CD4-positive, alpha-beta T cell (primary cell): ENCODE measurements at regions of chr14 and their contacts with region 1.

Region 1: DNA sequence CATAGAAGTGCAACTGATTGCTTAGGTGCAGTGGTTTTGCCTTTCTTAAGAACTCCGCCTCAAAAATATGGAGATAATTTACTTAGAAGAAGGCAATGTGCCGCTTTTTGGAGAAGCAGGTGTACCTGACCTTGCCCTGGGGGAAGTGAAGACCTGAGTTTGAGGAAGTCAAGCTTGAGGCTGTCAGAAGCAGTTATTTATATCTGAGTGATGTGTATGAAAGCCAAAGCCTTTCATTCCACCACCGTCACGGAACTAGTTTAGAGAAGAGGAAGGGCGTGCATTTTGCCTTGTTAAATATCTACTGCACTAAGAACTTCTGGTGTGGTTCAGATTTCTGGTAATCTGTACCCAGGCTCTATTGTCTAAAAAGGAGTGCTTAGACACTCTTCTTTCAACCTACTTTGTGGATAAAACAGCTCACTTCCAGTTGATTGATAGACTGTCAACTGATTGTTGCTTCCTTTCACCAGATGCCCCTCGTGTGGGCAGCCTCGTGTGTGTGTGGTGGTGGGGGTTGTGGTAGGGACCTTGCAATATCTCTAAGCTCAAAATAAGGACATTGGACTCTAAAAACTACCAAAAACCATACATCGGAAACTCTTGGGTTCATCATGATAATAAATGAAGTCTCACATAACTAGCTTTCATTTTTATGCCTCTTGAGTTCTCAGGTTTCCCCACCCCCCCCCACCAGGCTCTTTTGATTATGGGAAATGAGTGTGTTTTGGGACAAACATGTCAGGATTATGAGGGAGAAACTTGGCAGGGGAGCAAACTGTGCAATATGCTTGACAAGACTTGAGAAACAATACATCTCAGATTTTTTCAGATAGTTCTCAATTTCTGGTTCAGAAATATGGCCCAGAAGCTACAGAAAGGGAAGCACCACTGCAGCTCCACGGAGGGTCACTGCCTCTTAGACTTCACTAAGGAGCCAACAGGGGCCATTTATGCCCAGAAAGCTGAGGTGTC is 78.6 kb downstream of the ARF6 start:
- DNase-seq: peak in 13 of 14 experiments; percentile 16 to 87 (median 55)
- ATAC-seq: peak; percentile 84
- H3K4me3 ChIP-seq: peak overlapping the region; percentile 30
- H3K4me3 Mint-ChIP-seq: peak overlapping the region; percentile 50
- H3K27ac ChIP-seq: peak overlapping the region; percentile 80 to 85
- H3K27ac Mint-ChIP-seq: peak overlapping the region; percentile 90
- H3K4me1 ChIP-seq: peaks cover 66% of the 10 kb centered on the region
- H3K4me1 Mint-ChIP-seq: peaks cover 59% of the 10 kb centered on the region
- H3K27me3 ChIP-seq: no peaks in the 10 kb centered on the region
- H3K27me3 Mint-ChIP-seq: no peaks in the 10 kb centered on the region
- CTCF ChIP-seq: no peak

Region 2: DNA sequence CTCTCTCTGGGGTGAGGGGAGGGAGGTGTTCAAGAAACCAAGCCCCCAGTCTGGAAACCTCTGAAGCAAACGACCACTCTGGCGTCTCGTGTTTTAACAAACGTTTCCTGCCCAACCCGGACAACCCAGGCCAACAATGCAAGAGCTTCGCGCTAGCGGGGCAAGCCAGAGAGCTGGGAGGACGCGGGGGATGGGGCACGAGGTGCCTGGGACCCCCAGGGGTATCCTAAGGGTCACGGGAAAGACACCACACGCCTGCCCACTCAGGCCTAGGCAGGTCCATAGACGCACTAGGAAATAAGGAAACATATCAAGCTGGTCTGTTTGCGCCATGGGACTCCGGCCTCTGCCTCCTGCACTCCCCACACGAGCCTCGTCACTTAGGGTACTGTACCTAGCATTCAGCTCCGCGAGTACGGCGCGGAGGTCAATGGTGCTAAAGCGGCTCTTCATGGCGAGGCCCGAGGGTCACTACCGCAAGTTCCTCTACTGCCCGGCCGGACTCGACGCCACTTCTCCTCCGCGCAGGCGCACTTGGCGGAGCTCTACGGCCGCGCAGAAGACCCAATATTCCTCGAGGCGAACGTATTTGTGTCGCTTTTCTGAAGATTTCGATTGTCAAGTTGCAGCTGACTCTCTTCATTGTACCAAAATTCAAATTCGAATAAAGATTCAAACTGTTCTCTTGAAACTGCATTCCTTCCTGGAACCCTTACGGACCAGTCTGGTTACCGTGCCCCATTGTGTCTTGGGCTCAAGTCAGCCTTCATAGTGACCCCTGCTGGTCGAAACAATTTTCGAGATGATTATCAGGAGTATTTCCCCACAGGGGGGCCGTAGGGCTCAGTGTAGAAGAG is 118.9 kb before region 1 on chr14 and contains the start of gene NEMF:
- CTCF ChIA-PET with region 1: no interaction called
- POLR2A ChIA-PET with region 1: interaction called, 12 read pairs
- intact Hi-C with region 1: no loop called
- DNase-seq: peak; percentile 67 to 91 (median 72)
- ATAC-seq: peak; percentile 75
- H3K4me3 ChIP-seq: peak within 1 kb of the TSS; percentile 97
- H3K4me3 Mint-ChIP-seq: peak within 1 kb of the TSS; percentile 99
- H3K27ac ChIP-seq: peak within 1 kb of the TSS; percentile 64 to 80
- H3K27ac Mint-ChIP-seq: peak within 1 kb of the TSS; percentile 91
- H3K4me1 ChIP-seq: peaks cover 17% of the 10 kb centered on the region
- H3K4me1 Mint-ChIP-seq: peaks cover 46% of the 10 kb centered on the region
- H3K27me3 ChIP-seq: no peaks in the 10 kb centered on the region
- H3K27me3 Mint-ChIP-seq: no peaks in the 10 kb centered on the region
- CTCF ChIP-seq: peak; percentile 89
- total RNA-seq, gene NEMF: 96.0 to 97.7 TPM

Region 3: GRCh38 chr14:49940808-49941421 is 30.5 kb before region 1 on chr14:
- CTCF ChIA-PET with region 1: interaction called, 5 read pairs
- POLR2A ChIA-PET with region 1: interaction called, 62 read pairs
- intact Hi-C with region 1: loop called in 1 of 2 experiments (anchors 5 kb)
- DNase-seq: peak in 6 of 14 experiments; percentile 10 to 75 (median 34)
- ATAC-seq: peak; percentile 68
- H3K4me3 ChIP-seq: peak overlapping the region; percentile 19
- H3K4me3 Mint-ChIP-seq: peak overlapping the region; percentile 69
- H3K27ac ChIP-seq: peak overlapping the region in 1 of 2 donors; percentile 38
- H3K27ac Mint-ChIP-seq: peak overlapping the region; percentile 57
- H3K4me1 ChIP-seq: peaks cover 47% of the 10 kb centered on the region
- H3K4me1 Mint-ChIP-seq: peaks cover 68% of the 10 kb centered on the region
- H3K27me3 ChIP-seq: no peaks in the 10 kb centered on the region
- H3K27me3 Mint-ChIP-seq: no peaks in the 10 kb centered on the region
- CTCF ChIP-seq: no peak

Region 4: DNA sequence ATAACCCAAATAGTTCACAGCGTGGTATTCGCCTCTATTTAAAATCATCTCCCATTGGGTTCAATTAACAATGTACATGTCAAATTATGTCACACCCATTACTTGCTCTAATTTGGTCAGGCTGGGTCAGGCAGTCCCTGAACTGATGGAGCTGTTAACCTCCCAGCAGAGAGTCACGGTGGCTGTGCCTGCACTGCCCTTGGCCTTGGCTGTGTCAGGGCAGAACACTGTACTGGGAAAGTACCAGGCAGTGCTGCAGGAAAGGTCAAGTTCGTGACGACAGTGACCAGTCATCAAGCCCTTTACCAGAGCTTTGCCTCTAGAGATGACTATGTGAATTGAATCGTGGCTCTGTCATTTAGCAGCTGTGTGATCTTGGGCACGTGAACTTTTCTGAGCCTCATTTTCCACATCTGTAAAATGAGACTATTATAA is 21.5 kb after region 1 on chr14:
- CTCF ChIA-PET with region 1: interaction called, 4 read pairs
- POLR2A ChIA-PET with region 1: interaction called, 17 read pairs
- intact Hi-C with region 1: no loop called
- DNase-seq: no peak
- ATAC-seq: no peak
- H3K4me3 ChIP-seq: no peak overlapping the region
- H3K4me3 Mint-ChIP-seq: no peak overlapping the region
- H3K27ac ChIP-seq: no peak overlapping the region
- H3K27ac Mint-ChIP-seq: no peak overlapping the region
- H3K4me1 ChIP-seq: peaks cover 17% of the 10 kb centered on the region
- H3K4me1 Mint-ChIP-seq: peaks cover 13% of the 10 kb centered on the region
- H3K27me3 ChIP-seq: no peaks in the 10 kb centered on the region
- H3K27me3 Mint-ChIP-seq: no peaks in the 10 kb centered on the region
- CTCF ChIP-seq: no peak

Region 5: GRCh38 chr14:50020184-50020583 is 48.7 kb after region 1 on chr14:
- CTCF ChIA-PET with region 1: no interaction called
- POLR2A ChIA-PET with region 1: no interaction called
- intact Hi-C with region 1: no loop called
- DNase-seq: no peak
- ATAC-seq: no peak
- H3K4me3 ChIP-seq: no peak overlapping the region
- H3K4me3 Mint-ChIP-seq: no peak overlapping the region
- H3K27ac ChIP-seq: no peak overlapping the region
- H3K27ac Mint-ChIP-seq: no peak overlapping the region
- H3K4me1 ChIP-seq: peaks cover 15% of the 10 kb centered on the region
- H3K4me1 Mint-ChIP-seq: peaks cover 28% of the 10 kb centered on the region
- H3K27me3 ChIP-seq: no peaks in the 10 kb centered on the region
- H3K27me3 Mint-ChIP-seq: no peaks in the 10 kb centered on the region
- CTCF ChIP-seq: no peak

Region 6: DNA sequence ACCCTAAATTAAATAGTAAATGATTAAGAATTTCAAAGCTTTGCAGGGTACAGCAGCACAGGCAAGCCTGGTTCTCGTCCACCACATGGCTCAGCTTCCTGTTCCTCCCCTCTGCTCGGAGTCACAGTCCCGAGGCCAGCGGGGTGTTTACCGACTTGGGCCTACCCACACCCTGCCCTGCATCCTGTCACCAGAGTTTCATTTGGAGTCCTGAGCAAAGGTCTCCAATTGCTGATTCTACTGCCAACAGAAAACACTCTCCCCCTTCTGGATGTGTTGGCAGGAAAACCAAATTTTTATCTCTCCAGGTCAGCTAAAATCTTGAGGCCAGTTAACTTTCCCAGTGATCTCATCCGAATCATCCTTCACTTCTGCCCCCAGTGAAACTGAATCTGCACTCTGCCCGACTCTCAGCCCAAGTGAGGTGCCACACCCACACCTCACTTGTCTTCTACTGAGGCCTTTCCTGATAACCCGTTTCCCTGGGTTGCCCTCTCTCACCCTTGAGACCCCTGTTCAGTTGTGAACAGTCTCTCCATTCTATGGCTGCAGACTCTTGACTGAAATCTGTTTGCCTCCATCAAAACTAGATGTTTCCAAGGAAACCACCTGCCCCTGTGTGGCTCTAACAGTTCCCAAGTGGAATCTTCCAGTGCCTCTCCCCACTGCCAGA is 73.7 kb after region 1 on chr14:
- CTCF ChIA-PET with region 1: no interaction called
- POLR2A ChIA-PET with region 1: interaction called, 10 read pairs
- intact Hi-C with region 1: loop called in 1 of 2 experiments (anchors 2 kb)
- DNase-seq: peak; percentile 35 to 93 (median 72)
- ATAC-seq: peak; percentile 67
- H3K4me3 ChIP-seq: no peak overlapping the region
- H3K4me3 Mint-ChIP-seq: peak overlapping the region; percentile 43
- H3K27ac ChIP-seq: peak overlapping the region; percentile 48 to 78
- H3K27ac Mint-ChIP-seq: peak overlapping the region; percentile 89
- H3K4me1 ChIP-seq: peaks cover 72% of the 10 kb centered on the region
- H3K4me1 Mint-ChIP-seq: peaks cover 65% of the 10 kb centered on the region
- H3K27me3 ChIP-seq: no peaks in the 10 kb centered on the region
- H3K27me3 Mint-ChIP-seq: no peaks in the 10 kb centered on the region
- CTCF ChIP-seq: no peak

Region 7: GRCh38 chr14:50109342-50109741 is 137.9 kb after region 1 on chr14:
- CTCF ChIA-PET with region 1: interaction called, 4 read pairs
- POLR2A ChIA-PET with region 1: interaction called, 5 read pairs
- intact Hi-C with region 1: loop called in 1 of 2 experiments (anchors 2 kb)
- DNase-seq: no peak
- ATAC-seq: no peak
- H3K4me3 ChIP-seq: no peak overlapping the region
- H3K4me3 Mint-ChIP-seq: no peak overlapping the region
- H3K27ac ChIP-seq: no peak overlapping the region
- H3K27ac Mint-ChIP-seq: no peak overlapping the region
- H3K4me1 ChIP-seq: peaks cover under 1% of the 10 kb centered on the region
- H3K4me1 Mint-ChIP-seq: peaks cover 30% of the 10 kb centered on the region
- H3K27me3 ChIP-seq: no peaks in the 10 kb centered on the region
- H3K27me3 Mint-ChIP-seq: no peaks in the 10 kb centered on the region
- CTCF ChIP-seq: no peak